Colonic mucosa (tissue), 4 donors: ENCODE measurements at regions of chr18 and their contacts with region 1.

Region 1: GRCh38 chr18:51668101-51668500 is 470.6 kb upstream of the MEX3C start:
- DNase-seq: peak; percentile 46
- H3K4me3 ChIP-seq: no peak overlapping the region
- H3K27ac ChIP-seq: no peak overlapping the region
- H3K4me1 ChIP-seq: no peaks in the 10 kb centered on the region
- H3K27me3 ChIP-seq: no peaks in the 10 kb centered on the region
- CTCF ChIP-seq: peak; percentile 69

Region 2: DNA sequence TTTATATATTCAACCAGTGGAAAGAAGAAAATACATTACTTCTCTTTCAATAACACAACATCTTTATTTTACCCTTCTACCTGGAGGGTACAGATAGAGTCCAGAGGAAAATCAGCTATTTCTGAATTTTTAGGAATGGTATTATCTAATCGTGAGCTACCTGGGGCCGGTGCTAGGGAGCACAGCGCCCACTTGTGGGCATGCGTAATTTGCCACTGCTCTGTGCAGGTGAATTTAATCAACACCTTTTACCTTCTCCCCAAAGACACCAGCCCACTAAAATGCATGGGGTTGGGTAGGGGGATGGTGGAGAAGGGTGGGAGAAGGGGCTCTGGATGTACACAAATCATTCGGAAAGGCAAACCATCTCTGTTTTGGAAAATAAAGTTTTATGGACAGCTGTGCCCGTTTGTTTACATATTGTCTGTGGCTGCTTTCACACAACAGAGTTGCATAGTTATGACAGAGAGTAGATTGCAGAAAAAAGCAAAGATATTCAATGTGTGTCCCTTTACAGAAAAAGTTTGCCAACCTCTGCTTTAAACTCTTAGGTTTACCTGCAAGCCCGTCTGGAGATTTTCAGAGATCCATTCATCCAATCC is 620.4 kb after region 1 on chr18:
- intact Hi-C with region 1: loop called (anchors 2 kb)
- DNase-seq: peak; percentile 23
- H3K4me3 ChIP-seq: no peak overlapping the region
- H3K27ac ChIP-seq: no peak overlapping the region
- H3K4me1 ChIP-seq: no peaks in the 10 kb centered on the region
- H3K27me3 ChIP-seq: no peaks in the 10 kb centered on the region
- CTCF ChIP-seq: peak; percentile 62